ENCODE measurements at regions of chr13 and their contacts with region 1.

Region 1: GRCh38 chr13:29935309-29935981 is 85.0 kb upstream of the UBL3 start:
- DNase-seq: peak; percentile 93
- ATAC-seq: peak; percentile 95
- H3K4me3 Mint-ChIP-seq: peak overlapping the region; percentile 68
- H3K27ac Mint-ChIP-seq: peak overlapping the region; percentile 88
- H3K4me1 Mint-ChIP-seq: peaks cover 54% of the 10 kb centered on the region
- H3K27me3 Mint-ChIP-seq: no peaks in the 10 kb centered on the region

Region 2: GRCh38 chr13:29595380-29596063 is 339.9 kb before region 1 on chr13 and contains the start of gene SLC7A1:
- CTCF ChIA-PET with region 1: no interaction called
- POLR2A ChIA-PET with region 1: interaction called, 4 read pairs
- intact Hi-C with region 1: loop called (anchors 2 to 10 kb)
- DNase-seq: peak; percentile 92
- ATAC-seq: peak; percentile 88
- H3K4me3 Mint-ChIP-seq: peak within 1 kb of the TSS; percentile 90
- H3K27ac Mint-ChIP-seq: peak within 1 kb of the TSS; percentile 95
- H3K4me1 Mint-ChIP-seq: peaks cover 36% of the 10 kb centered on the region
- H3K27me3 Mint-ChIP-seq: no peaks in the 10 kb centered on the region
- total RNA-seq, gene SLC7A1: 91.1 to 126 TPM

Region 3: DNA sequence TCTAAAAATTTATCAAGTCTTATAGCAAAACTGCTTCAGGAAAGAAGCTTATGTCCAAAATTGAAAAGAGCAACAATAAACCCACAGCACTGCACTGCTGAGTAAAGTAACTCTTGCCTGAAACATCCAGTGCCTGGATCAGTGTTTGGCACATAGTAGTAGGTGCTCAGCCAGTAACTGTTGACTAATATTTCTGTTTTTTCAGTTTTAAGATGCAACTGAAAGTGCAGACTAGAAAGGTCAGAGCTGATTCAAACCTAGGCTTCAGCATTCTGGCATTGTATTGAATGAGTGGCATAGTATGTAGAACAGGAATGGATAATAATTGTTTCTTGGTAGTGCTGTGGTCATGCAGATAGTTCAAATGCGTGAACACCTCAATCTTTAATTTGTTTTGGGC is 152.6 kb before region 1 on chr13:
- CTCF ChIA-PET with region 1: interaction called, 4 read pairs
- POLR2A ChIA-PET with region 1: no interaction called
- intact Hi-C with region 1: loop called in 1 of 2 experiments (anchors 1 kb)
- DNase-seq: peak; percentile 36
- ATAC-seq: peak; percentile 98
- H3K4me3 Mint-ChIP-seq: no peak overlapping the region
- H3K27ac Mint-ChIP-seq: peak overlapping the region; percentile 53
- H3K4me1 Mint-ChIP-seq: peaks cover 32% of the 10 kb centered on the region
- H3K27me3 Mint-ChIP-seq: no peaks in the 10 kb centered on the region

Region 4: GRCh38 chr13:29907670-29908069 is 27.8 kb before region 1 on chr13:
- CTCF ChIA-PET with region 1: interaction called, 3 read pairs
- POLR2A ChIA-PET with region 1: no interaction called
- intact Hi-C with region 1: loop called in 1 of 2 experiments (anchors 1 kb)
- DNase-seq: peak; percentile 28
- ATAC-seq: peak; percentile 70
- H3K4me3 Mint-ChIP-seq: no peak overlapping the region
- H3K27ac Mint-ChIP-seq: peak overlapping the region; percentile 27
- H3K4me1 Mint-ChIP-seq: peaks cover 24% of the 10 kb centered on the region
- H3K27me3 Mint-ChIP-seq: no peaks in the 10 kb centered on the region

Region 5: GRCh38 chr13:29954082-29955028 is 18.9 kb after region 1 on chr13:
- CTCF ChIA-PET with region 1: interaction called, 5 read pairs
- POLR2A ChIA-PET with region 1: interaction called, 6 read pairs
- intact Hi-C with region 1: loop called in 1 of 2 experiments (anchors 1 kb)
- DNase-seq: peak; percentile 65
- ATAC-seq: peak; percentile 90
- H3K4me3 Mint-ChIP-seq: peak overlapping the region; percentile 62
- H3K27ac Mint-ChIP-seq: peak overlapping the region; percentile 95
- H3K4me1 Mint-ChIP-seq: peaks cover 42% of the 10 kb centered on the region
- H3K27me3 Mint-ChIP-seq: no peaks in the 10 kb centered on the region